OCI-LY7 (cell line): ENCODE measurements at regions of chr15 and their contacts with region 1.

Region 1: DNA sequence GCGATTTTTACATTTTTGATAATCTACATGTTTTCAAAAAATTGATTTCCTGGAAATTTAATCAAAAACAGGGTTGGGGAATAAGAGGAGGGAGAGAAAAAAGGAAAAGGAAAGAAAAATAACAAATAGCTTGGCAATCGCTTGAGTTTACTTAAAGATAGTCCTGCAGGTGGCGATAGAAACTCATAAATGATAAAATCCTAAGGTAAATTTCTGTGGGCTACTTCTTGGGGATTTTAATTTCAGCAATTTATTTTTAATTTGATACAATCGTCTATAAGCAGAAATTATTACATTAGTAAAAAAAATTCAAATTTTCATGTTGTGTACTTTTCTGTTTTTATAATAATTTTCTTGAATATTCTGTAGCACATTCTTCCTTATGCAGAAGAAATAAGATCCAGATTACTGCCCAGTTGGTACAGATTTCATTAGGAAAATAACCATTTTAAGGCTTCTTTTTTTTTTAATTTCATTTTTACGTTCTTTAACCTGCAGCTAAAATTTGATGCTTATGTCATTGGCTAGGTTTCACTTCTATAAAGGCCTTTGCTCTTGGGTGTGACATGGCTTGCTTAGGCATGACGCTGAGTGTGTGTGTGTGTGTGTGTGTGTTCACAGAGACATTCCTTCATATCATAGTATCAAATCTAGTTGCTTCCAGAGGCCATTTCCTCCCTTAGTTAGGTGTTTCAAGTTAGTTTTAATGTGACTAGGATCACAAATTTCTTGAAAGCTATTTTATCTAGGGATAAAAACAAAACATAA is 181.8 kb downstream of the MCTP2 start:
- DNase-seq: peak; percentile 51
- H3K4me3 ChIP-seq: no peak overlapping the region
- H3K27ac ChIP-seq: no peak overlapping the region
- H3K4me1 ChIP-seq: peaks cover 29% of the 10 kb centered on the region
- CTCF ChIP-seq: peak; percentile 96

Region 2: GRCh38 chr15:94478763-94479162 is 65.6 kb after region 1 on chr15:
- CTCF ChIA-PET with region 1: no interaction called
- POLR2A ChIA-PET with region 1: interaction called, 9 read pairs
- intact Hi-C with region 1: loop called (anchors 2 kb)
- DNase-seq: peak; percentile 93
- H3K4me3 ChIP-seq: peak overlapping the region; percentile 27
- H3K27ac ChIP-seq: peak overlapping the region; percentile 67
- H3K4me1 ChIP-seq: peaks cover 32% of the 10 kb centered on the region
- CTCF ChIP-seq: peak; percentile 66

Region 3: DNA sequence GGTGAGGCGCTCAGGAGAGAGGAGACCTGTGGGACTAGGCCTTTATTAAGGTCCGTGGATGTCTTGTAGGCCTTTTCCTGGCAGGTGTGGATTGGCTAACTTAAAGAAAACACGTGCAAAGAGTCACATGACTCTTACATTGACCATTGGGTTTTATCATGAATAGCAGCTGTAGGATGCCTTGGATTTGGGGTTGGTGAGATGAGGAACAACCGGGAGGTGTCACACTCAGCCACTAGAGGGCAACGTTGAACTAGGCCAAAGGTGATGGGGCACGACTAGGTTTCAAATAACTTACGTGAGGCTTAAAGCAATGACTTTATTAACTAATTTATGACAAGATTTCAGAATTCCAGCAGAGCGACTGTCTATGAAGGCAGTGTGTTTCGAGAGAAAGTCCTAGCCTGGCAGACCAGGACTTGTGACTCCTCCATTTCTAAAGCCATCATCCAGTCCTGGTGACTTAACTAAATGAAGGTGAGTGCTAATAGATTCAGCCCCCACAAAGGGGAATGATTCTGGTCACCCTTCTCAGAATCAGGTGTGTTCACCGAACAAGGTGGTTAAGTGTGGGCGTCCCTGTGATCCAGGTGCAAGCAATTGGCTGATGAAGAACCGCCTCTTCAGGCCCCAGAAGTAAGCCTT is 163.8 kb after region 1 on chr15:
- CTCF ChIA-PET with region 1: no interaction called
- POLR2A ChIA-PET with region 1: no interaction called
- intact Hi-C with region 1: loop called (anchors 2 kb)
- DNase-seq: peak; percentile 64
- H3K4me3 ChIP-seq: no peak overlapping the region
- H3K27ac ChIP-seq: no peak overlapping the region
- H3K4me1 ChIP-seq: no peaks in the 10 kb centered on the region
- CTCF ChIP-seq: peak; percentile 89